Caco-2 (cell line): ENCODE measurements at regions of chr20 and their contacts with region 1.

Region 1: GRCh38 chr20:35318502-35319157 is 26.4 kb upstream of the FAM83C start:
- DNase-seq: peak in 1 of 2 experiments; percentile 72
- H3K4me3 ChIP-seq: no peak overlapping the region
- H3K4me3 Mint-ChIP-seq: no peak overlapping the region
- H3K27ac Mint-ChIP-seq: peak overlapping the region; percentile 86
- H3K4me1 ChIP-seq: peaks cover 55% of the 10 kb centered on the region
- H3K4me1 Mint-ChIP-seq: peaks cover 48% of the 10 kb centered on the region
- H3K27me3 ChIP-seq: no peaks in the 10 kb centered on the region
- H3K27me3 Mint-ChIP-seq: no peaks in the 10 kb centered on the region
- CTCF ChIP-seq: no peak

Region 2: GRCh38 chr20:35329435-35330139 is 11.0 kb after region 1 on chr20:
- CTCF ChIA-PET with region 1: interaction called, 34 read pairs
- POLR2A ChIA-PET with region 1: no interaction called
- intact Hi-C with region 1: loop called (anchors 1 kb)
- DNase-seq: peak; percentile 91 to 93
- H3K4me3 ChIP-seq: no peak overlapping the region
- H3K4me3 Mint-ChIP-seq: no peak overlapping the region
- H3K27ac Mint-ChIP-seq: peak overlapping the region; percentile 69
- H3K4me1 ChIP-seq: peaks cover 55% of the 10 kb centered on the region
- H3K4me1 Mint-ChIP-seq: peaks cover 32% of the 10 kb centered on the region
- H3K27me3 ChIP-seq: no peaks in the 10 kb centered on the region
- H3K27me3 Mint-ChIP-seq: no peaks in the 10 kb centered on the region
- CTCF ChIP-seq: peak; percentile 92 to 99